Naive thymus-derived CD4-positive, alpha-beta T cell (primary cell): ENCODE measurements at regions of chr9 and their contacts with region 1.

Region 1: GRCh38 chr9:136482793-136483588 is at the start of gene SEC16A:
- DNase-seq: peak; percentile 97 to 100 (median 99)
- ATAC-seq: peak; percentile 85
- H3K4me3 ChIP-seq: peak within 1 kb of the TSS; percentile 93
- H3K4me3 Mint-ChIP-seq: peak within 1 kb of the TSS; percentile 86 to 99 (median 97)
- H3K27ac ChIP-seq: peak within 1 kb of the TSS; percentile 97
- H3K27ac Mint-ChIP-seq: peak within 1 kb of the TSS; percentile 86 to 99 (median 98)
- H3K4me1 ChIP-seq: peaks cover 17 to 30% of the 10 kb centered on the region in 2 donors
- H3K4me1 Mint-ChIP-seq: peaks cover 20 to 47% (median 39%) of the 10 kb centered on the region in 7 donors
- H3K27me3 ChIP-seq: no peaks in the 10 kb centered on the region
- H3K27me3 Mint-ChIP-seq: no peaks in the 10 kb centered on the region
- total RNA-seq, gene SEC16A: 79.8 to 88.5 (median 86.1) TPM

Region 2: DNA sequence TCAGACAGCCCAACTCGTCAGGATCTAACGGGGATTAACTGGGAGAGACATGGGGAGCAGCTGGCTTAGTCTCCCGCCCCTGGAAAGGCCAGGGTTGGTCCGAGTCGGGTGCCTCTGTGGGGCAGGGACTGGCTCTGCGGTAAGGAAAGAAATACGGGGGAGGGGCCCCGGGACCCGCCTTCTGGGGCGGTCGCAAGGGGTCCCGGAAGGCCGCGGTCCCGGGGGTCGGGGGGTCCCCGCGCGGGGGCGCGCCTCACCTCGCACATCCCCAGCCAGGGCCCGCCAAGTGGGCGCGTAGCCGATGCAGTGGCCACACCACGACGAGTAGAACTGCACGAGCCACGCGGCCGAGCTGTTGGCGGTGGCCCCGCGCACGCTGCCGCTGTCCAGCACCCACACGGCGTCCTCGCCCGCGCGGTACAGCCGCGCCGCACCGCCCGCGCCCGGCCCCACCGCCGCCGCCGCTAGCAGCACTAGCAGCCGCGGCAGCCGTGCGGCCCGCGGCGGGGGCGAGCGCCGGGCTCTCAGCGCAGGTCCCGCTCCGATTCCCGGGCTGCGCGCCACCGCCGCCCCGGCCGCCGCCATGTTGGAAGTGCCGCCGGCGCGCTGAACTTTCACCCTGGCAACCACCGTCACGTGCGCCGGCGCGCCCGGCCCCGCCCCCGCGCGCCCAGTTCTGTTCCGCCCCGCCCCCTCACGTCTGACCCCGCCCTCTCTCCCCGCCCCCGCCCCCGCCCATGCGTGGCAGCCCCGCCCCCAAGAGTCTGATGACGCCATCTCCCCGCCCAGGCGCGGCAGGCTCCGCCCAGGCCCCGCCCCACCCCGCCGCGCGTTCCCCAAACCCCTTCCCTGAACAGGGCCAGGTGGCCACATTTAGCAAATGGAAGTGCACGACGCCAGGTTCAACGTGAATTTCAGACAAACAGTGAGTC is 237.5 kb before region 1 on chr9 and contains the start of gene QSOX2:
- CTCF ChIA-PET with region 1: no interaction called
- POLR2A ChIA-PET with region 1: no interaction called
- intact Hi-C with region 1: loop called in 1 of 2 experiments (anchors 1 kb)
- DNase-seq: peak; percentile 76 to 89 (median 82)
- ATAC-seq: peak; percentile 94
- H3K4me3 ChIP-seq: peak within 1 kb of the TSS; percentile 65
- H3K4me3 Mint-ChIP-seq: peak within 1 kb of the TSS; percentile 89 to 100 (median 94)
- H3K27ac ChIP-seq: peak within 1 kb of the TSS; percentile 65
- H3K27ac Mint-ChIP-seq: peak within 1 kb of the TSS; percentile 83 to 93 (median 88)
- H3K4me1 ChIP-seq: peaks cover 22 to 29% of the 10 kb centered on the region in 2 donors
- H3K4me1 Mint-ChIP-seq: peaks cover 25 to 45% (median 36%) of the 10 kb centered on the region in 7 donors
- H3K27me3 ChIP-seq: no peaks in the 10 kb centered on the region
- H3K27me3 Mint-ChIP-seq: peaks cover 0 to 2% (median 0%) of the 10 kb centered on the region in 5 donors
- total RNA-seq, gene QSOX2: 11.5 to 15.9 (median 12.0) TPM

Region 3: DNA sequence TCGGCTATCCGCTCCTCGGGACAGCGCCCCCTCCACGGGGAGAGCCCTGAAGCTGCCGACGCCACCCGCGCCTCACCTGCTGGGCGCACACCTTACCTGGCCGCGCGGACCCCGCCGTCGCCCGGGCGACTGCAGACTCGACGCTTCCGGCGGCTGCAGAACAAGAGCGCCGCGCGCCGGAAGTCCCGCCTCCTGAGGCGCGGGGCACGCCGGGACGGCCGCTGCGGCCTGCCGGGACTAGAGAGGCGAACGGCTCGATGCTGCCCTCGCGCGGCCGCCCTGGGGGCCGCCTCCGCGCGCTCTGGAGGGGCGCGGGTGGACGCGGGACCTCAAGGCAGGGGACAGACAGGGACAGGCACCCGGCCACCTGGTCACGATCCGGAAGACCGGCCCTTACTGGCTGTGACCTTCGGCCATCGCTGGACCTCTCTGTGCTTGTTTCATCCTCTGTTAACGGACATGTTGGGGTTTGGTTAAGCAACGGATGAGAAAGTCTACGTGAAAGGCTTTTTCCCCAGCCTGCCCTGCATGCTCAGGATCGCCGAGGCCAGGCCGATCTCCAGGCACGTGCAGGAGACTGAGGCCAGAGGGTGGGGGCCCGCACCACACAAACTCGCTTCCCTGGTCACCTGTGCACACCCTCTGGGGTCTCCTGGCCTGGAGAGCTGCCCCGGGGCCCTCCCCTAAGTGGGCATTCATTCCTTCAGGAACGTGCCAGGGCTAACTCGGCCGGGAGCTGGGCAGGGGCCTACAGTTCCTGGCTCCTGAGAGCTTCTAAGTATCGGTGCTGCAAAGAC is 82.8 kb before region 1 on chr9 and contains the start of gene SNAPC4:
- CTCF ChIA-PET with region 1: no interaction called
- POLR2A ChIA-PET with region 1: no interaction called
- intact Hi-C with region 1: loop called (anchors 1 to 2 kb)
- DNase-seq: peak; percentile 77 to 93 (median 87)
- ATAC-seq: peak; percentile 91
- H3K4me3 ChIP-seq: peak within 1 kb of the TSS; percentile 62
- H3K4me3 Mint-ChIP-seq: peak within 1 kb of the TSS; percentile 83 to 90 (median 86)
- H3K27ac ChIP-seq: peak within 1 kb of the TSS; percentile 62
- H3K27ac Mint-ChIP-seq: peak within 1 kb of the TSS in 8 of 9 donors; percentile 26 to 78 (median 76)
- H3K4me1 ChIP-seq: peaks cover 33 to 38% of the 10 kb centered on the region in 2 donors
- H3K4me1 Mint-ChIP-seq: peaks cover 30 to 61% (median 45%) of the 10 kb centered on the region in 7 donors
- H3K27me3 ChIP-seq: no peaks in the 10 kb centered on the region
- H3K27me3 Mint-ChIP-seq: no peaks in the 10 kb centered on the region
- total RNA-seq, gene SNAPC4: 10.0 to 16.3 (median 12.8) TPM

Region 4: GRCh38 chr9:136521537-136521936 is 38.5 kb after region 1 on chr9:
- CTCF ChIA-PET with region 1: no interaction called
- POLR2A ChIA-PET with region 1: no interaction called
- intact Hi-C with region 1: no loop called
- DNase-seq: no peak
- ATAC-seq: peak; percentile 74
- H3K4me3 ChIP-seq: no peak overlapping the region
- H3K4me3 Mint-ChIP-seq: no peak overlapping the region
- H3K27ac ChIP-seq: no peak overlapping the region
- H3K27ac Mint-ChIP-seq: no peak overlapping the region
- H3K4me1 ChIP-seq: no peaks in the 10 kb centered on the region
- H3K4me1 Mint-ChIP-seq: peaks cover 0 to 5% (median 0%) of the 10 kb centered on the region in 7 donors
- H3K27me3 ChIP-seq: no peaks in the 10 kb centered on the region
- H3K27me3 Mint-ChIP-seq: no peaks in the 10 kb centered on the region

Region 5: GRCh38 chr9:136545966-136546698 is 63.1 kb after region 1 on chr9 and contains the start of gene NOTCH1:
- CTCF ChIA-PET with region 1: no interaction called
- POLR2A ChIA-PET with region 1: interaction called, 3 read pairs
- intact Hi-C with region 1: loop called (anchors 1 kb)
- DNase-seq: peak; percentile 77 to 91 (median 86)
- ATAC-seq: peak; percentile 89
- H3K4me3 ChIP-seq: peak within 1 kb of the TSS; percentile 81
- H3K4me3 Mint-ChIP-seq: peak within 1 kb of the TSS; percentile 78 to 95 (median 88)
- H3K27ac ChIP-seq: peak within 1 kb of the TSS; percentile 80
- H3K27ac Mint-ChIP-seq: peak within 1 kb of the TSS; percentile 57 to 90 (median 81)
- H3K4me1 ChIP-seq: peaks cover 20 to 32% of the 10 kb centered on the region in 2 donors
- H3K4me1 Mint-ChIP-seq: peaks cover under 1 to 43% (median 28%) of the 10 kb centered on the region in 7 donors
- H3K27me3 ChIP-seq: no peaks in the 10 kb centered on the region
- H3K27me3 Mint-ChIP-seq: no peaks in the 10 kb centered on the region
- total RNA-seq, gene NOTCH1: 49.7 to 92.9 (median 58.0) TPM

Region 6: GRCh38 chr9:136686794-136687711 is 204.1 kb after region 1 on chr9 and contains the start of gene AGPAT2:
- CTCF ChIA-PET with region 1: no interaction called
- POLR2A ChIA-PET with region 1: interaction called, 3 read pairs
- intact Hi-C with region 1: loop called in 1 of 2 experiments (anchors 1 kb)
- DNase-seq: peak in 8 of 9 donors; percentile 30 to 77 (median 37)
- ATAC-seq: peak; percentile 93
- H3K4me3 ChIP-seq: peak within 1 kb of the TSS; percentile 52
- H3K4me3 Mint-ChIP-seq: peak within 1 kb of the TSS; percentile 61 to 85 (median 78)
- H3K27ac ChIP-seq: peak within 1 kb of the TSS; percentile 49
- H3K27ac Mint-ChIP-seq: peak within 1 kb of the TSS in 2 of 9 donors; percentile 38 to 78
- H3K4me1 ChIP-seq: peaks cover 5 to 7% of the 10 kb centered on the region in 2 donors
- H3K4me1 Mint-ChIP-seq: peaks cover 0 to 6% (median 0%) of the 10 kb centered on the region in 7 donors
- H3K27me3 ChIP-seq: no peaks in the 10 kb centered on the region
- H3K27me3 Mint-ChIP-seq: no peaks in the 10 kb centered on the region
- total RNA-seq, gene AGPAT2: 2.3 to 20.6 (median 8.5) TPM

Region 7: DNA sequence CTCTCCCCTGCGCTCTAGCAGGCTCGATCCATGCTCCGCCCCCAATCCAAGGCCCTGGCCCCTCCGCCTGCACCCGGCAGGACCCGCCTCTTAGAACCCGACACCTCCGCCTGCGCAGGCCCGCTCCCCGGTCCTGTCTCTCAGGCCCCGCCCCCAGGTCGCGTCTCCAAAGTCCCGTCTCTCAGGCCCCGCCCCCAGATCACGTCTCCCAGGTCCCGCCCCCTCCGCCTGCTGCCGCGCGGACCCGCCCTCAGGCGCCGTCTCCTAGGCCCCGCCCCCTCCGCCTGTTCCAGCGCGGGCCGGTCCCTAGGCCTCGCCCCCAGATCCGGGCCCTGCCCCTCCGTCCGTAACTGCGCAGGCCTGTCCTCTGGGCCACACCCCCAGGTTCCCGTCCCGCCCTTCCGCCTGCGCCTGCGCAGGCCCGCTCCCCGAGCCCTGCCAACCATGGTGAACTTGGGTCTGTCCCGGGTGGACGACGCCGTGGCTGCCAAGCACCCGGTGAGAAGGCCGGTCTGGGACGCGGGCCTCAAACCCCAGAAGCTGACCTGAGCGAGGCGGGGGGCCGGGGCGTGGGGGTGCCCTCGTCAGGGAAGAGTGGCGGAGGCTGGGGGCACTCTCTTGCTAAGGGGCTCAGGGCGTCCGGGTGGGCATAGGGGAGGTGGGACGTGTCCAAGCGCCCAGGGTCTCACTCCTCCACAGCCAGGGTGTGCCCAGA is 308.1 kb after region 1 on chr9 and contains the start of gene TMEM141:
- CTCF ChIA-PET with region 1: no interaction called
- POLR2A ChIA-PET with region 1: no interaction called
- intact Hi-C with region 1: loop called in 1 of 2 experiments (anchors 1 kb)
- DNase-seq: peak; percentile 99 to 100 (median 99)
- ATAC-seq: peak; percentile 92
- H3K4me3 ChIP-seq: peak within 1 kb of the TSS; percentile 94
- H3K4me3 Mint-ChIP-seq: peak within 1 kb of the TSS; percentile 76 to 90 (median 86)
- H3K27ac ChIP-seq: peak within 1 kb of the TSS; percentile 91
- H3K27ac Mint-ChIP-seq: peak within 1 kb of the TSS; percentile 57 to 98 (median 92)
- H3K4me1 ChIP-seq: peaks cover 18 to 22% of the 10 kb centered on the region in 2 donors
- H3K4me1 Mint-ChIP-seq: peaks cover 10 to 40% (median 31%) of the 10 kb centered on the region in 7 donors
- H3K27me3 ChIP-seq: no peaks in the 10 kb centered on the region
- H3K27me3 Mint-ChIP-seq: peaks cover 0 to 16% (median 0%) of the 10 kb centered on the region in 5 donors
- total RNA-seq, gene TMEM141: 27.2 to 54.9 (median 36.2) TPM

Region 8: DNA sequence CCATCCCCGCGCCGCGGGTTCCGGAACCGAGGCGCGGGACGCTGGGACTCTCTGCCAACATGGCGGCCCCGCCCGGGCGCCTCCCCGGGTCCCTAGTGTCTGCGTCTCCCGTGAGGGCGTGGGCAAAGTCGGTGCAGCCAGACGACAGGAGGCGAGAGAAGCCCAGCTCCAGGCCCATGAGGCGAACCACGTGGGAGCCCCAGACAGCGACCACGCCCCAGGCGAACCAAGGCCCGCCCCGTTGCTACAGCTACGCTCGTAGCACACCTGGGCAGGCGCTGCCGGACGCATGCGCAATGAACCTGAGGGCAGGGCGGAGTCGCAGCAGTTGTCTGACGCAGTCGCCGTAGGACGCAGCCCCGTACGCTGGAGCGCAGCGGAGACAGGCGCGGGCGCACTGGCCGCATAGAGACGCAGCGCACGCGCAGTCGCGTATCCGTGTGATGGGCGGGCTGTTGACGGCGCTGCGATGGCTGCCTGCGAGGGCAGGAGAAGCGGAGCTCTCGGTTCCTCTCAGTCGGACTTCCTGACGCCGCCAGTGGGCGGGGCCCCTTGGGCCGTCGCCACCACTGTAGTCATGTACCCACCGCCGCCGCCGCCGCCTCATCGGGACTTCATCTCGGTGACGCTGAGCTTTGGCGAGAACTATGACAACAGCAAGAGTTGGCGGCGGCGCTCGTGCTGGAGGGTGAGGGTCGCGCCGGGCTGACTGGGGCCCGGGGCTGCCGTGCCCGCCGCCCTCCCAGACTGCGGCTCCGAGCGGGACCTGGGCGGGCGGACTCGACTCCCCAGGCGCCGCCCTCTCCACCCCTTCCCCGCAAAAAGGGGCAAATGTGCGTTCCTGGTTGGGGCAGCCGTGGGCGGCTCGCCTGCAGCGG is 603.8 kb after region 1 on chr9 and contains the start of gene MAN1B1:
- CTCF ChIA-PET with region 1: no interaction called
- POLR2A ChIA-PET with region 1: no interaction called
- intact Hi-C with region 1: loop called in 1 of 2 experiments (anchors 5 kb)
- DNase-seq: peak; percentile 96 to 100 (median 99)
- ATAC-seq: peak; percentile 92
- H3K4me3 ChIP-seq: peak within 1 kb of the TSS; percentile 73
- H3K4me3 Mint-ChIP-seq: peak within 1 kb of the TSS; percentile 88 to 96 (median 92)
- H3K27ac ChIP-seq: peak within 1 kb of the TSS; percentile 92
- H3K27ac Mint-ChIP-seq: peak within 1 kb of the TSS; percentile 92 to 98 (median 95)
- H3K4me1 ChIP-seq: peaks cover 18% of the 10 kb centered on the region in 2 donors
- H3K4me1 Mint-ChIP-seq: peaks cover 25 to 34% (median 30%) of the 10 kb centered on the region in 7 donors
- H3K27me3 ChIP-seq: no peaks in the 10 kb centered on the region
- H3K27me3 Mint-ChIP-seq: no peaks in the 10 kb centered on the region
- total RNA-seq, gene MAN1B1: 57.3 to 74.2 (median 70.2) TPM